ENCODE measurements at regions of chr19 and their contacts with region 1.

Region 1: GRCh38 chr19:17260842-17261325 is 3.7 kb downstream of the USHBP1 start:
- DNase-seq: no peak
- H3K4me3 ChIP-seq: no peak overlapping the region
- CTCF ChIP-seq: peak; percentile 92

Region 2: DNA sequence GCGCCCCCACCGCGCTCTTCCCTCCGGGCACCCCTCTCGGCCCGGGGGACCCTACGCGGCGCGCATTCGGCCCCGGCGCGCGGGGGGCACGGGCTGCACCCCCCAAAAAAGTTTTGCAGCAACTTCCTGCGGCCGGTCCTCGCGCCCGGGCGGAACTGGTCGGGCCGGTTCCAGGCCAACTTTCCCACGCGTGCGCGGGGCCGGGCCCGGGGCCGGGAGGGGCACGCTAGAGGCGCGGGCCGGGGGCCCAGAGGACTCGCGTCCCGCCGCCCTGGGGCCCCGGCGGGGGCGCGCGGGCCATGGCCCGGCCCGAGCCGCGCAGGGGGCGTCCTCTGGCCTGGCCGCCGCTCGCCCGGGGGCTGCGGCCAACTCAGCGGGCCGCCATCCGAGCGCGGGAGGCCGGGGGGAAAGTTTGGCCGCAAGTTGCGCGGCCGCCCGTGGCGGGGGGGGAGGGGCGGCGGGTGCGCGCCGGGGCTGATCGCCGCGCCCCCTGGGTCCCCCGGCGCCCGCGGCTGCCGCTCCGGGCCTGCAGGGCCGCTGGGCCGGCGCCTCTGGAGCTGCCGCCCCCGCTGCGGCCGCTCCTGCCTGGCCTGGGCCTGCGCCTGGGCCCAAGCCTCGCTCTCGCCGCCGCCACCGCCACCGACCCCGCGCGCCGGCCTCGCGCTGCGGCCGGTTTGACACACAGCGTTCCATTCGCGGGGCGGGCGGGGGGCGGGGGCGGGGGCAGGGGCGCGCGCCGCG is 15.5 kb before region 1 on chr19 and contains the start of gene NR2F6:
- CTCF ChIA-PET with region 1: interaction called, 33 read pairs
- POLR2A ChIA-PET with region 1: no interaction called
- DNase-seq: no peak
- H3K4me3 ChIP-seq: peak within 1 kb of the TSS; percentile 82
- CTCF ChIP-seq: no peak

Region 3: DNA sequence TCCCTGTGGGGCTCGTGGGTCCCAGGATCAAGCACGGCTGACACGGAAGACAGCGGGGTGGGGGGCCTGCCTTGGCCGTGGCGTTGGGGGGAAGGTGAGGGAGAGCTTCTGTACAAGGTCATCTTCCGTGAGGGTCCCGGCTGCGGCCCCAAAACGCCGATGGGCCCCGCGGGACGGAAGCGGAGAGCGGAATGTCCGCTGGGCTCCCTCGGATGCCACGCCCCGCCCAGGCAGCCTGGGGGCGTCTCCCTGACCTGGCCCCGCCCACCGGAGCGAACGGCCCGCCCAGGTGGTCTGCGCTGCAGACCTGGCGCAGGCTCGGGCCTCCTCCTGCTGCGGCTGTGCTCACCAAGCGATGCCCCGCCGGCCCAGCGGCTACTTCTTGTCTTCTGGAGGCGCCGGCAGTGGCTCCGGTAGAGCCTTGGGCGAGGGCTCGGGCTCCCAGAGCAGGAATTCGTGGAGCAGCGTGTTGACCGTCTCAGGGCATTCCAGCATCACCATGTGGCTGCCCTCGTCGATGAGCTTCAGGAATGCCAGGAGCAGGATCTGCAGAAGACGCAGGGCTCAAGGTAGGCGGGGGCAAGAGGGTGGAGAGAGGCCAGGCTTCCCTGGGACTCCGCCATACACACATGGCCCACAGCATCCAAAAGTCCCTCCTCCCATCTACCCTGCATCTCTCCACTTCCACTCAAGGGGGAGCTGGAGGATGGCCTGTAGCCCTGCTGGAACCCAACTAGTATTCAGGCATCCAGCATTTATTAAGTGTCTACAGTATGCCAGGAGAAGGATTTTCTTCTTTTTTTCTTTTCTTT is 31.6 kb after region 1 on chr19:
- CTCF ChIA-PET with region 1: interaction called, 12 read pairs
- POLR2A ChIA-PET with region 1: no interaction called
- DNase-seq: no peak
- H3K4me3 ChIP-seq: peak overlapping the region; percentile 63
- CTCF ChIP-seq: peak; percentile 82

Region 4: DNA sequence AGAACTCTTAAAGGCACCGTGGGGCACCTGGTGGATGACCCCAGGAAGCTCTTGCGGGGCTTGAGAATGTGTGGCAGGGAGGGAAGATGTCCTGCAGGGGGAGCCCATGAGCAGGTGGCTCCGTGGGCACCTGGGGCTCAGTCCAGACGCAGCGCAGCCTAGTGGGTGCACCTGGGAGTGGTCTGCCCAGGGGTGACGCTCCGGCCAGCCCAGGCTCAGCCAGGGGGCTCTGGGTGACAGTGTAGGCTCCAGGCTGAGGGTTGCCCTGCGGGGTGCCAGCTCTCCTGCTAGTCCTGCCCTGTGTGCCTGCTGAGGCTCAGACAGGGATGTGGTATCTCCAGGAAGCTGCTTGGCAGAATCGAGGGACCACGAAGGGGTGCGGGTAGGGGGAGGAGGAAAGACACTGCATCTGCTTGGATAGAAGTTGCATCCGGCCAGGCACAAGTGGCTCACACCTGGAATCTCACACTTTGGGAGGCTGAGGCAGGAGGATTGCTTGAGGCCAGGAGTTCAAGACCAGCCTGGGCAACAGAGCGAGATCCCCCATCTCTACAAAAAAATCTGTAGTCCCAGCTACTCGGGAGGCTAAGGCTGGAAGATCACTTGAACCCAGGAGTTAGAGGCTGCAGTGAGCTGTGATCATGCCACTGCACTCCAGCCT is 235.6 kb after region 1 on chr19:
- CTCF ChIA-PET with region 1: no interaction called
- POLR2A ChIA-PET with region 1: no interaction called
- DNase-seq: no peak
- H3K4me3 ChIP-seq: no peak overlapping the region
- CTCF ChIP-seq: peak; percentile 91